K562 (cell line): ENCODE measurements at regions of chr3 and their contacts with region 1.

Region 1: DNA sequence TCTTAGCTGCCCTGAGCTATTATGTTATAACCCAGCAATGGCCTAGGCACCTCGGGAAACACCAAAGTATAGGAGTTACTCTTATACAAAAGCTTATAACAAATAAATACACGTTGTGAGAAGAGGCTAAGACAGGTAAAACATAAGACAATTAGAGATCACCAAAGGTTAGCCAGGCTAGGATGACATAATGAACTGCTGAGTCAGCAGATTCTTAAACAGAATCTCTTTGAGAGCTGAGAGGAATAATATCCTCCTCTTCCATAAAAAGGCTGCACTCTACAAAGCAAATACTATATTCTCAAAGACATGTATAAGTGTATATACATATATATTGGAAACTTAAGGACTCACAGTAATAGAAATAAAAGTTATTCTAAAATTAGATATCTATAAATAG is 37.2 kb downstream of the GOLIM4 start:
- DNase-seq: no peak
- ATAC-seq: no peak
- H3K4me3 ChIP-seq: no peak overlapping the region
- H3K27ac ChIP-seq: no peak overlapping the region
- H3K4me1 ChIP-seq: no peaks in the 10 kb centered on the region
- H3K27me3 ChIP-seq: no peaks in the 10 kb centered on the region
- CTCF ChIP-seq: no peak
- EP300 ChIP-seq: no peak
- POLR2A ChIP-seq: no peak
- RAD21 ChIP-seq: no peak

Region 2: GRCh38 chr3:168459226-168459784 is 400.8 kb after region 1 on chr3:
- CTCF ChIA-PET with region 1: no interaction called
- POLR2A ChIA-PET with region 1: no interaction called
- in situ Hi-C with region 1: no loop called
- intact Hi-C with region 1: loop called (anchors 5 kb)
- DNase-seq: no peak
- ATAC-seq: no peak
- H3K4me3 ChIP-seq: no peak overlapping the region
- H3K27ac ChIP-seq: no peak overlapping the region
- H3K4me1 ChIP-seq: no peaks in the 10 kb centered on the region
- H3K27me3 ChIP-seq: no peaks in the 10 kb centered on the region
- CTCF ChIP-seq: no peak
- EP300 ChIP-seq: no peak
- POLR2A ChIP-seq: no peak
- RAD21 ChIP-seq: no peak